A673 (cell line): ENCODE measurements at regions of chr7 and their contacts with region 1.

Region 1: DNA sequence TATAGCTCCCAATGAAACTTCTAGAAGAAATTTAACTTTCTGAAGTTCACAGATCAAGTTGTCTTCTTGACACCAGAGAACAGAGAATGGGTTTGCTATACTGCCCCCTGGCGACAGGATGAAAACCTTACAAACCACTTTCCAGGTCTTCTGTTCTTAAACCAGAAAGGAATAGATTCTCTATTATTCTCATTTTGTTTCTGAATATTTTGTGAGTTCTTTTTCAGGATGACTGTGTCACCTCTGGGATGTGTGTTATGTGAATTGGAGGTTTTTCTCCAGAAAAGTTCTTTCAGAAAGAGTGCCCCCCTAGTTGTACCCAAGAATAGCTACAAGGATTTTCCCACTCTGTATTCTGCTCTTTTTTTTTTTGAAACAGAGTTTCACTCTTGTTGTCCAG is 6.3 kb downstream of the IFT22 start:
- DNase-seq: peak; percentile 72
- H3K4me3 ChIP-seq: no peak overlapping the region
- H3K27ac ChIP-seq: no peak overlapping the region
- H3K4me1 ChIP-seq: no peaks in the 10 kb centered on the region
- H3K27me3 ChIP-seq: no peaks in the 10 kb centered on the region
- CTCF ChIP-seq: peak; percentile 75

Region 2: DNA sequence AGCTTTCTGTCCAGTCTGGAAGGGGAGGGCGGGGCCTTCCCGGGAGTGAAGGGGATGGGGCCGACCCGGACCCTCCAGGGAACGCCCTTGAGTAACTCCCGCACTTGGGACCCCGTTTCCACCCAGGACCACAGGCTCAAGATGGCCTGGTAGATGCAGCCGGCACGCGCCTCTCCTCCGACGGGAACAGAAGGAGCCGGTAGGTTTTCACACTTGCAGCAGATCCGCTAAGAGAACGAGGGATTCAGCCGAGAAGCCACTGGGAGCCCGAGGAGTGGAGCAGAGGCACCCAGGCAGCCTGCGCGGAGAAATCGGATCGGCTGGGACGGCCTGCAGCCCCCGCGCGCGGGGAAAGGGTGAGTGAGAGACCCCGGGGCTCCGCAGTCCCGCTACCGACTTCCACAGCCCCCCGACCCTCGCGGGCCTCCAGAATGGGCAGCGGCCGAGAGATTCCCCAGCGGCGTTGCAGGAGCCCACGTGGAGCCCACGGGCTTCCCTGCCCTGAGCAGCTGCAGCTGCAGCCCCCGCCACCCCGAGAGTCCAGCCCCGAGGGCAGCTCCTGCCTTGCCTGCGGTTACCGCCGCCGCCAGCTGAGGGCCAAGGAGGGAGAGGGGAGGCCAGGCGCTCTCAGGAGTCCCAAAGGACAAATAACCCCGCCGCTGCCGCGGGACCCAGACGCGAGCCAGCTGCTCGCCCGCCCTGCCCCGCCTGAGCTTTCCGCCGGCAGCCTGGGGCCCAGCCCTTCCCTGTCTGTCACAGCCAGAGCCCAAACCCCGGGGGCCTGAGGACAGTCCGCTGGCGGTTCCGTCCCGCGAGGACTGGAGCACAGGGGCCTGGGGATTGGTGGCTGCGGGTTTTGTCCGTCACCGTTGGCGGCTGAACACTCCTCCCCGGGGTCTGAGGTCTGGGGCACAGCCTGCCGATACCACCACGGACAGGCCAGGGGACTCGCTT is 15.5 kb before region 1 on chr7:
- CTCF ChIA-PET with region 1: interaction called, 3 read pairs
- POLR2A ChIA-PET with region 1: interaction called, 15 read pairs
- intact Hi-C with region 1: no loop called
- DNase-seq: no peak
- H3K4me3 ChIP-seq: no peak overlapping the region
- H3K27ac ChIP-seq: no peak overlapping the region
- H3K4me1 ChIP-seq: no peaks in the 10 kb centered on the region
- H3K27me3 ChIP-seq: peaks cover 52% of the 10 kb centered on the region
- CTCF ChIP-seq: no peak